Activated naive CD8-positive, alpha-beta T cell treated with anti-CD3 and anti-CD28 coated beads, Interleukin-2, amount 10 ng/mL, durations not matched to agents 7 days and 5 days (primary cell): ENCODE measurements at regions of chr17 and their contacts with region 1.

Region 1: DNA sequence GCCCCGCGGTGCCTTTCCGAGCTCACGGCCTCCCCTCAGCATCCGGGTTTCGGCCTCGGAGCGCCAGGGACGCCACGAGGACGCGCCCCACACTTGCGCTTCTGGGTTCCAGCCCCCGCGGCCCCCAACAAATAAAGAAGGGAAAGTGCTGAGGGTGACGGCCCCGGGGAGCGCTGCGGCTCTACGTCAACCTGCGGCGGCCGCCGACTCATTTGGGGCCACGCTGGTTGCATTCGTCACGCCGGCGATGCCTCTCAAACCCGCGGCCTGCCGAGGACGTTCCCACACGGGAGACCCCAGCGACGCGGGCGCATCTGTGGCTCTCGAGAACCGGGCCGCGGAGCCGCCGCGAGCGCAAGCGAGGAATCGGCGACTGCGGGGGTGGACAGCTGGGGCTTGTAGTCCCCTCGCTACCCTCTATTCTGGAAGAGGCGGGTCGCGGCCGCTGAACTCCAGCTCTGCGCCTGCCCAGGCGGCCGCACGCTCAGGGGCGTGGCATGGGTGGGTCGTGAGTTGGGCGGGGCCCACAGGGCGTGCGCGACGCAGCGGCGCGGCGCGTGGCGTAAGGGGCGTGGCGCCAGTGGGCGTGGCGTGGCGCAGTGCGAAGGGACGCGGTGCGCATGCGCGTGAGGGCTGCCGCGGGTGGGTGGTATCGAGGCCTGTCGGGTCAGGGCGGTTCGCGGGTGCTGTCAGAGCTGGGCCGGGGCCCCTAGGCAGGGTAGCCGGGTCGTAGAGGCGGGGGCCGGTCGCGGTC is at the start of gene AMZ2:
- DNase-seq: peak; percentile 100
- ATAC-seq: peak; percentile 87
- H3K4me3 Mint-ChIP-seq: peak within 1 kb of the TSS; percentile 89
- H3K27ac Mint-ChIP-seq: peak within 1 kb of the TSS; percentile 98
- H3K4me1 Mint-ChIP-seq: peaks cover 30% of the 10 kb centered on the region
- H3K27me3 Mint-ChIP-seq: no peaks in the 10 kb centered on the region
- total RNA-seq, gene AMZ2: 84.2 to 84.5 TPM

Region 2: GRCh38 chr17:68184816-68185436 is 62.7 kb before region 1 on chr17:
- POLR2A ChIA-PET with region 1: interaction called, 13 read pairs
- DNase-seq: peak; percentile 43
- ATAC-seq: peak; percentile 78
- H3K4me3 Mint-ChIP-seq: peak overlapping the region; percentile 66
- H3K27ac Mint-ChIP-seq: peak overlapping the region; percentile 78
- H3K4me1 Mint-ChIP-seq: peaks cover 45% of the 10 kb centered on the region
- H3K27me3 Mint-ChIP-seq: peaks cover 6% of the 10 kb centered on the region

Region 3: GRCh38 chr17:68228817-68229572 is 18.6 kb before region 1 on chr17:
- POLR2A ChIA-PET with region 1: no interaction called
- DNase-seq: no peak
- ATAC-seq: no peak
- H3K4me3 Mint-ChIP-seq: no peak overlapping the region
- H3K27ac Mint-ChIP-seq: no peak overlapping the region
- H3K4me1 Mint-ChIP-seq: peaks cover 9% of the 10 kb centered on the region
- H3K27me3 Mint-ChIP-seq: no peaks in the 10 kb centered on the region

Region 4: DNA sequence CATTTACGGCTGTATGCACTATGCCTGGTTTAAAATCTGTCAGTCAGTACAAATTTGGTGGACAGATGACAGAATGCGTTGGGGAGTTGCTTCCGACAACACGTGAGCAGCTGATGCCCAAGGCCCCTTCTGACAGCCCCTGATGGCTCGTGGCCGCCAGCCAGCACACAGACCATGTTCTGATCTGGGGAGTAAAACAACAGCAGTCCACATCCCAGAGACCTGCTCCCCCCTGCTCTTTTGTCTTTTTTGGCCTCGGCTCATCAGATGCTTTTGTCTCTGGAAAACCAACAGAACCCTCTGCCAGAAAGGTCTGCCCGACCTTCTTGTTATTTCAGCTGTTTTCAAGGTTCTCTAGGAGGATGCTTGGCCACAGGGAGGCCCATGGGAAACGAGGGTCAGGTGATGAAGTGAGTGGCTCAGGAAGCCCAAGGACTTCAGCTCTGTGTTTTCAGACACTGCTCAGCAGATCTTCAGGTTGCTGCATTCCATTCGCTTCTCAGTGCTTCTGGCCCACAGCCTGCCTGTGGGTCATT is 54.5 kb after region 1 on chr17:
- POLR2A ChIA-PET with region 1: no interaction called
- DNase-seq: no peak
- ATAC-seq: no peak
- H3K4me3 Mint-ChIP-seq: no peak overlapping the region
- H3K27ac Mint-ChIP-seq: no peak overlapping the region
- H3K4me1 Mint-ChIP-seq: peaks cover 16% of the 10 kb centered on the region
- H3K27me3 Mint-ChIP-seq: peaks cover 2% of the 10 kb centered on the region

Region 5: DNA sequence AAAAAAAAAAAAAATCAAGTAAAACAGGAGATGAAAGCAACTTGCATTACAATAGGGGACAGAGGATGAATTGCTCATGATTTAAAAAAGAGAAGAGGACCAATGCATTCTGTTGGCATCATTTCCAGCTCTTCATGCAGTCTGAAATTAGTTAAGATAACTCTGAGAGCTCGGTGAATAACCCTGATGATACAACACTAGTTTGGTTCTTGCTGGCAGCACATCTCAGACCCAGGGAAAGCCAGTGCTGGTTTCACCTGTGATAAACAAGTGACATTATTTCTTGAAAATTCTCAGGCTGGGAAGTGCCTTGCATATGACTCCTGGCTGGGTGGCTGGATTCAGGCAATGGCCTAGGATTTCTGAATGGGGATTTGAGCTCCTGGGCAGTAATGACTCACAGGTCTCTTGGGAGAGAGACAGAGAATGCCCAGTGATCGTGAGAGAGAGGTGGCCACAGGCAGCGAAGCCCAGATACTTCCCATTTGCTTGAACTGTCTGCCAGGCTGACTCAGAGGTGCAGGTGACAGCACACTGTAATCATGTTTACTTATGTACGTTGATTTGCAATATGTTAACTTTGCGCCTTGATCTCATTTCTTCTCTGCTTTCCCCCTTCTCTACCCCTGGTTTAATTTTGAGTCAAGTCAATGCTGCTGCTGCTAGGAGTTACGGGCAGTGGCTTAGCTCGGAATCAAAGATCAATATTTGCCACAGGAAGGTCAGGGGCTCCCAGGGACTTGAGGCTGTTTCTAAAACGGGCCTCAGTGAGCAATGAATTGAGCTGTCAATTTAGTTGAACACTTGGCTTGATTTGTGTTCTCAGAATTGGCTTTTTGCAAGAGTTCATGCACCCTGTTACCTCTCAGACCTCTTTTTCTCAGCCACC is 70.7 kb after region 1 on chr17:
- POLR2A ChIA-PET with region 1: no interaction called
- DNase-seq: no peak
- ATAC-seq: no peak
- H3K4me3 Mint-ChIP-seq: no peak overlapping the region
- H3K27ac Mint-ChIP-seq: no peak overlapping the region
- H3K4me1 Mint-ChIP-seq: peaks cover 23% of the 10 kb centered on the region
- H3K27me3 Mint-ChIP-seq: no peaks in the 10 kb centered on the region

Region 6: DNA sequence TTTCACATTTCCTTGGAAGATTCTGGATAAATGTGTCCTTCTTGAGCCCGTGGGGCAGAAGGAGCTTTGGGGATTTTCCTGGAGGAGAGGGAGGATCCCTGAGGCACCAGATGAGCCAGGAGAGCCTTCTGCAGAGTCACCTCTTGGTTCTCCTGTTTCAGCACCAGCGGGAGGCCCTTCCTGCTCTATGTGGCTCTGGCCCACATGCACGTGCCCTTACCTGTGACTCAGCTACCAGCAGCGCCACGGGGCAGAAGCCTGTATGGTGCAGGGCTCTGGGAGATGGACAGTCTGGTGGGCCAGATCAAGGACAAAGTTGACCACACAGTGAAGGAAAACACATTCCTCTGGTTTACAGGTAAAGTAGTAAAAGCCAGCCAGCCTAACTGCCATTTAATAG is 120.8 kb after region 1 on chr17:
- POLR2A ChIA-PET with region 1: no interaction called
- DNase-seq: no peak
- ATAC-seq: no peak
- H3K4me3 Mint-ChIP-seq: no peak overlapping the region
- H3K27ac Mint-ChIP-seq: no peak overlapping the region
- H3K4me1 Mint-ChIP-seq: peaks cover 10% of the 10 kb centered on the region
- H3K27me3 Mint-ChIP-seq: no peaks in the 10 kb centered on the region

Region 7: DNA sequence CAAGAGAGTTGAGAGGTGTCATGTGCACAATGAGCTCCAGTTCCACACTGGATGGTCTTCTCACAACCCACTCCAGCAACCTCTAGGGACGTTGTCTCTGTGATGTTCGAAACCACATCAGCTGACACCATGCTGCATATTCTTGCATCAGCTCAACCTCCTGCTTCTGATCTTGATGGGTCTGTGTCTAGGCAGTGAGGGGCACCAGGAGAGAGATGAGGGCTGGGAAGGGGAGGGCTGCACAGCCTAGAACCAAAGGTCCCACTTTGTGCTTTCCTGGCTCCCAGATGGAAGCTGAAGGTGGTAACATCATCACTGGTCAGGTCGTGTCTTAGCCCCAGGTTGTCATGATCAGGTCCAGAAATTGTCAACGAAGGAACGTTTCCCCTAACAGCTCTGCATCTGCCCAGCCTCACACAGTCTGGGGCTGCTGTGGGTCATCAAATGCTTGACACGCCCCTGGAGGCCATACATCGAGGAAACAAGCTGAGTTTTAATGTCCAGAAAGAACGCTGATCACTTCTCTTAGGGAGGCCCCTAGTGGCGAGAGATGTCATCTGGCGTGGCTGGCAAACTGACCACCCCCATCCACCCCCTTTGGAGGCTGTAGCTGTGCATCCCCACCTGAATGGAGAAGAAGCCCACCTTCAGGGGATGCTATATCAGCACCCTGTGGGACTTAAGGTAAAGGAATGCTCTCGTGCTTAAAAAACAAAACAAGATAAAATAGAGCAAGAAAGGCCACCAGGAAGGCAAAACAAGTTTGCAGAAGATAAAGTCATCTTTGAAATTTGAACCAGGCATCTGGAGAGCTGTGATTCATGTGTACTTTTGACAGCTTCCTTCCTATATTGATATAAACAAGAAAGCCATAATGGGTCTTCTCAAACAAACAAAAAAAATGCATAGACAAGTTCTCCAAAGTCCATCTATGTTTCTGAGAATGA is 151.3 kb after region 1 on chr17:
- POLR2A ChIA-PET with region 1: interaction called, 11 read pairs
- DNase-seq: peak; percentile 52
- ATAC-seq: peak; percentile 79
- H3K4me3 Mint-ChIP-seq: peak overlapping the region; percentile 65
- H3K27ac Mint-ChIP-seq: peak overlapping the region; percentile 94
- H3K4me1 Mint-ChIP-seq: peaks cover 26% of the 10 kb centered on the region
- H3K27me3 Mint-ChIP-seq: no peaks in the 10 kb centered on the region

Region 8: GRCh38 chr17:68435876-68436842 is 188.5 kb after region 1 on chr17:
- POLR2A ChIA-PET with region 1: interaction called, 17 read pairs
- DNase-seq: peak; percentile 77
- ATAC-seq: peak; percentile 69
- H3K4me3 Mint-ChIP-seq: peak overlapping the region; percentile 49
- H3K27ac Mint-ChIP-seq: peak overlapping the region; percentile 86
- H3K4me1 Mint-ChIP-seq: peaks cover 38% of the 10 kb centered on the region
- H3K27me3 Mint-ChIP-seq: no peaks in the 10 kb centered on the region